Endothelial cell of umbilical vein (primary cell): ENCODE measurements at regions of chr7 and their contacts with region 1.

Region 1: GRCh38 chr7:38107486-38107893 is 70.6 kb upstream of the STARD3NL start:
- DNase-seq: peak; percentile 59
- H3K4me3 ChIP-seq: no peak overlapping the region
- H3K27ac ChIP-seq: no peak overlapping the region
- H3K4me1 ChIP-seq: no peaks in the 10 kb centered on the region
- H3K27me3 ChIP-seq: peaks cover 7 to 31% of the 10 kb centered on the region in 2 experiments
- CTCF ChIP-seq: peak; percentile 59 to 73
- POLR2A ChIP-seq: no peak

Region 2: GRCh38 chr7:37916673-37917660 is 190.5 kb before region 1 on chr7 and contains the start of gene SFRP4:
- CTCF ChIA-PET with region 1: interaction called, 3 read pairs
- POLR2A ChIA-PET with region 1: no interaction called
- dilution Hi-C with region 1: no loop called
- intact Hi-C with region 1: loop called (anchors 5 kb)
- DNase-seq: peak; percentile 56
- H3K4me3 ChIP-seq: peak within 1 kb of the TSS in 1 of 3 experiments; percentile 20
- H3K27ac ChIP-seq: no peak within 1 kb of the TSS
- H3K4me1 ChIP-seq: peaks cover 4% of the 10 kb centered on the region
- H3K27me3 ChIP-seq: peaks cover 31 to 42% of the 10 kb centered on the region in 2 experiments
- CTCF ChIP-seq: peak; percentile 54 to 66
- POLR2A ChIP-seq: no peak
- total RNA-seq, gene SFRP4: not detected in 2 replicates

Region 3: DNA sequence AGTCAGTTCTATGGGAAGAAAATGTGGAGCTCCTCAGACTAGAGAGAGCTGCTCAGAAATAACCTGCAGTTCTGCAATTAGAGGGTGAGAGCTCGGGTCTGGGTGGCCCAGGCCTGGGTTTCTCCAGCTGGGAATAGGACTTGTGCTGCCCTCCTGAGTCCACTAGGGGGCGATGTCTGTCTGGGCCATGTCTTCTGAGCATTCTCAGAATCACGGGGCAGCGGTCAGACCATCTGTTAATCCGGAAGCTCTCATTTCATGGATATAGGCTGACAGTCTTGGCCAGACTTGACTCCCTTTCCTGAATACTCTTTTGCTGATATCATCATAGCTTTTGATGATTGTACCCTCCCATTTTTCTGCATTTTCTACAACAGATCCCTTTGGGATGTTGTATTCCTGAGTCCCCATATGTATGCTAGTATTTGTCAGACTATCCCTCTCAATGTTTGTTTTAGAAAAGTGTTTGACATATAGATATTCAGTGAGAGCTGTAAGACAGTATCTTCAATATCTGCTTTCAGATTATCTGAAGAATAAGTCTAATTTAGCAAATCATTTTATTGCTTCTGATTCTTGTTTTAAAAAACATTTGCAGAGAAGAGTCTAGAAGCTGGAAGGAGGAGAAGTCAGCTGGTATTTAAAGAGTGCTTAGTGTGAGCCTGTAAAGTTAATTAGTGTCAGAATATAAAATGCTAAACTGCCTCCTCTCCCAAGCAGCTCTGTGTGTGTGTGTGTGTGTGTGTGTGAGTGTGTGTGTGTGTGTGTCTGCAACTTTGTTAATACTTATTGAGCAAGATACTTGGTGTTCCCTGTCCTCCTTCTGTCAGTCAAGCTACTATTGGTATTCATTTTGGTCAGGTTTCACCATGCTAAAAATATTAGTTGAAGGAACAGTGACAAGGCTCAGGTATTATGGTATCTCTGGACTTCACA is 108.5 kb after region 1 on chr7:
- CTCF ChIA-PET with region 1: interaction called, 60 read pairs
- POLR2A ChIA-PET with region 1: no interaction called
- dilution Hi-C with region 1: no loop called
- intact Hi-C with region 1: no loop called
- DNase-seq: peak; percentile 88
- H3K4me3 ChIP-seq: no peak overlapping the region
- H3K27ac ChIP-seq: peak overlapping the region; percentile 43
- H3K4me1 ChIP-seq: peaks cover 13% of the 10 kb centered on the region
- H3K27me3 ChIP-seq: no peaks in the 10 kb centered on the region
- CTCF ChIP-seq: peak; percentile 98 to 99
- POLR2A ChIP-seq: no peak

Region 4: DNA sequence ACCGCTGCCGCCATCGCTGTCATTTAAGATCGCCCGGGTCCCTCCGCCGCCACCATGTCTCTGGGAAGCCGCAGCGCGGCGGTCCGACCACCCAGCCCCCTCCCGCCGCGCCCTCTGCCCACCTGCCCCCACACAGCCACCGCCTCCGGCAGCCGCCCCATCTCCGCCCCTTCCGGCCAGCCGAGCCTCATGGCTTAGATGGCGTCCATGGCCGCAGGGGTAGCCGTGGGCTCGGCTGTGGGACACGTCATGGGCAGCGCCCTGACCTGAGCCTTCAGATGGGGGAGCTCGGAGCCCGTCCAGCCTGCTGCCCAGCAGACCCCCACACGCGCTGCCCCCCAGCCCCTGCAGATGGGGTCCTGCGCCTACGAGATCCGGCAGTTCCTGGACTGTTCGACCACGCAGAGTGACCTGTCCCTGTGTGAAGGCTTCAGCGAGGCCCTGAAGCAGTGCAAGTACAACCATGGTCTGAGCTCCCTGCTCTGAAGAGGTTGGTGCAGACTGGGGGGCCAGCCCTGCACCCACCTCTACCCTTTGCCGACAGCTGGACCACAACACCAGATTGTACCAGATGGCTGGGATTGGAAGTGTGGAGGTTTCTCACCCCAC is 203.9 kb after region 1 on chr7:
- CTCF ChIA-PET with region 1: interaction called, 7 read pairs
- POLR2A ChIA-PET with region 1: no interaction called
- dilution Hi-C with region 1: no loop called
- intact Hi-C with region 1: loop called (anchors 2 kb)
- DNase-seq: no peak
- H3K4me3 ChIP-seq: peak overlapping the region; percentile 40 to 58 (median 44)
- H3K27ac ChIP-seq: no peak overlapping the region
- H3K4me1 ChIP-seq: peaks cover 13% of the 10 kb centered on the region
- H3K27me3 ChIP-seq: no peaks in the 10 kb centered on the region
- CTCF ChIP-seq: no peak
- POLR2A ChIP-seq: no peak

Region 5: GRCh38 chr7:38335492-38336147 is 228.1 kb after region 1 on chr7:
- CTCF ChIA-PET with region 1: interaction called, 44 read pairs
- POLR2A ChIA-PET with region 1: no interaction called
- dilution Hi-C with region 1: no loop called
- intact Hi-C with region 1: loop called (anchors 1 kb)
- DNase-seq: peak; percentile 82
- H3K4me3 ChIP-seq: no peak overlapping the region
- H3K27ac ChIP-seq: no peak overlapping the region
- H3K4me1 ChIP-seq: no peaks in the 10 kb centered on the region
- H3K27me3 ChIP-seq: no peaks in the 10 kb centered on the region
- CTCF ChIP-seq: peak; percentile 98 to 100
- POLR2A ChIP-seq: no peak